ENCODE measurements at regions of chr9 and their contacts with region 1.

Region 1: DNA sequence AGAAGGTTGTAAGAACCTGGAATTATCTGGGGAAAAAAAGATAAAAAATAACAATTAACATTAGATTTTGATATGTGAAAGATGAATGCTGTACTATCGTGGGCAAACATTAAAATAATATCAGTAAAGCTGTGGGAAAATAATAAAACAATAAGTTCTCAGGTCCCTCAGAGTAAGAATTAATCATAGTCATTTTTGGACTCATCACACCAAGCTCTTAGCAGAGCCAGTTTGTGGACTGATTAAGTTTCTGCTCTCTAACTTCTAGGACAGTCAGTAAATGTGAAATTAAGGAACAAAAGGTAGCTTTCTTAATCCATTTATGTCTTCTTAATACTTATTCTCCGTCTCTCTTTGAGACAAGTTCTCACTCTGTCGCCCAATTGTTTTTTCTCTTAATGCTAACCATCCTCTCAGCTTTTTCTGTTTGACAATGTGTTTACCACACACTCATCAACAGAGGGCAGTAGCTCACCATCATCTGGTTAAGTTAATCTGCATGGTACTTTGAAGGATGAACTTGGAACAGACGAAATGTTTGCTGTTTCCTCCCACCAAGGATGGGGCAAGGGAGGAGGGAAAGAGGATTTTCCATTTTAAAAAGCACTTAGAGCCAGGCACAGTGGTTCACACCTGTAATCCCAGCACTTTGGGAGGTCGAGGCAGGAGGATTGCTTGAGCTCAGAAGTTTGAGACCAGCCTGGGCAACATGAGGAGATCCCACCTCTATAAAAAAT is 5.3 kb upstream of the ACO1 start:
- DNase-seq: no peak
- ATAC-seq: peak; percentile 81 to 92

Region 2: GRCh38 chr9:32278991-32279390 is 100.2 kb before region 1 on chr9:
- intact Hi-C with region 1: no loop called
- DNase-seq: no peak
- ATAC-seq: no peak

Region 3: GRCh38 chr9:32431940-32432555 is 52.9 kb after region 1 on chr9:
- intact Hi-C with region 1: loop called (anchors 2 to 5 kb)
- DNase-seq: peak; percentile 46
- ATAC-seq: peak; percentile 58 to 65

Region 4: GRCh38 chr9:32579706-32580331 is 200.7 kb after region 1 on chr9:
- intact Hi-C with region 1: loop called (anchors 1 to 2 kb)
- DNase-seq: peak; percentile 67
- ATAC-seq: no peak

Measured in left cardiac atrium (tissue), 4 donors.